H1 (cell line): ENCODE measurements at regions of chr14 and their contacts with region 1.

Region 1: GRCh38 chr14:49461529-49462401 is 124.4 kb downstream of the RPS29 start:
- DNase-seq: no peak
- H3K4me3 ChIP-seq: no peak overlapping the region
- H3K27ac ChIP-seq: no peak overlapping the region
- H3K4me1 ChIP-seq: peaks cover 0 to 7% (median 5%) of the 10 kb centered on the region in 4 experiments; a peak in 4 of 7 replicates
- H3K27me3 ChIP-seq: no peaks in the 10 kb centered on the region
- CTCF ChIP-seq: peak in 2 of 3 experiments; percentile 43 to 74; a peak in 2 of 4 replicates
- EP300 ChIP-seq: no peak
- POLR2A ChIP-seq: no peak
- RAD21 ChIP-seq: peak; percentile 77 to 78

Region 2: DNA sequence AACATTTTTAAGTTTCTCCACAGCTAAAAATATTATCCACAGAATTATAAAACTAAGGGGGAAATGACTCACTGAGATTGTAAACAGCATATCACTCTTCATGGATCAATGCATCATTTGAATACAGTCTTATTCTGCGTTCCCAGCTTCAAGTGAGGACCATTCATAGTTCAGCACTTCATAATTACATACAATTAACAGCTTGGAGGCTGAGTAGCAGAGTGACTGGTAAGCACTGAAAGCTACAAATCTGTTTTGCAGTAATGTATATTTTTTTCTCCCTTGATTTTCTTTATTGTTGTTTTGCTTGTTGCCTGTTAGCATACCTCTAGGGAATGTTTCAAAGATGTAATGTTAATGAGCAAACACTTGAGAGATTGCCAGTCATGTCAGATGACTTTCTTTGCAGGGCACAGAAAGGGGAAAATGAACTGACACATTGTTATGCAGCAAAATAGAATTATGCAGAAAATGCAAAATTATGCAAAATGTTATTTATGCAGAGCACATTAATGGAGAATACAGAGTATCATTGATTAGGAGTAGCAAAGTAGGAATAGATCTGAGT is 14.1 kb before region 1 on chr14:
- CTCF ChIA-PET with region 1: interaction called, 51 read pairs
- POLR2A ChIA-PET with region 1: no interaction called
- DNase-seq: no peak
- H3K4me3 ChIP-seq: no peak overlapping the region
- H3K27ac ChIP-seq: no peak overlapping the region
- H3K4me1 ChIP-seq: peaks cover 0 to 12% (median 0%) of the 10 kb centered on the region in 4 experiments; a peak in 1 of 7 replicates
- H3K27me3 ChIP-seq: no peaks in the 10 kb centered on the region
- CTCF ChIP-seq: no peak
- EP300 ChIP-seq: no peak
- POLR2A ChIP-seq: no peak
- RAD21 ChIP-seq: no peak

Region 3: DNA sequence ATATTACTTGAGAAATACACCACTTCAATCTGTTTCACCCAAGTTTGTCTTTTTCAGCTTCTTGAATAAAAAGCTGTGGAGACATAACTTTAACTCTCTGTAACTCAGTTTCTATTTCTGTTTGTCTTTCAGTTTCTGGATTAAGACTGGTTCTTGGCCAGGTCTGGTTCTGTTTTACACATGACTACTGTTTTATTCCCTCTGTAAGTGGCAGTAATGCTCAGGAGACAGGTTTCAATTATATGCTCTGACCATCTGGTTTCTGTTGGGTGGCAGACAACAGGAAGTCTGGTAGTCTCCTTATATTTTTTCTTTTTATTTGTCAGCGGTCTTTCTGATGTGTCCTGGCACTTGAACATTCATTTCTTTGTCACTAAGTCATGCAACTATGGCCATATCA is 21.5 kb after region 1 on chr14:
- CTCF ChIA-PET with region 1: interaction called, 37 read pairs
- POLR2A ChIA-PET with region 1: no interaction called
- DNase-seq: no peak
- H3K4me3 ChIP-seq: no peak overlapping the region
- H3K27ac ChIP-seq: no peak overlapping the region
- H3K4me1 ChIP-seq: no peaks in the 10 kb centered on the region
- H3K27me3 ChIP-seq: no peaks in the 10 kb centered on the region; a peak in 1 of 7 replicates
- CTCF ChIP-seq: no peak
- EP300 ChIP-seq: no peak
- POLR2A ChIP-seq: no peak
- RAD21 ChIP-seq: no peak

Region 4: DNA sequence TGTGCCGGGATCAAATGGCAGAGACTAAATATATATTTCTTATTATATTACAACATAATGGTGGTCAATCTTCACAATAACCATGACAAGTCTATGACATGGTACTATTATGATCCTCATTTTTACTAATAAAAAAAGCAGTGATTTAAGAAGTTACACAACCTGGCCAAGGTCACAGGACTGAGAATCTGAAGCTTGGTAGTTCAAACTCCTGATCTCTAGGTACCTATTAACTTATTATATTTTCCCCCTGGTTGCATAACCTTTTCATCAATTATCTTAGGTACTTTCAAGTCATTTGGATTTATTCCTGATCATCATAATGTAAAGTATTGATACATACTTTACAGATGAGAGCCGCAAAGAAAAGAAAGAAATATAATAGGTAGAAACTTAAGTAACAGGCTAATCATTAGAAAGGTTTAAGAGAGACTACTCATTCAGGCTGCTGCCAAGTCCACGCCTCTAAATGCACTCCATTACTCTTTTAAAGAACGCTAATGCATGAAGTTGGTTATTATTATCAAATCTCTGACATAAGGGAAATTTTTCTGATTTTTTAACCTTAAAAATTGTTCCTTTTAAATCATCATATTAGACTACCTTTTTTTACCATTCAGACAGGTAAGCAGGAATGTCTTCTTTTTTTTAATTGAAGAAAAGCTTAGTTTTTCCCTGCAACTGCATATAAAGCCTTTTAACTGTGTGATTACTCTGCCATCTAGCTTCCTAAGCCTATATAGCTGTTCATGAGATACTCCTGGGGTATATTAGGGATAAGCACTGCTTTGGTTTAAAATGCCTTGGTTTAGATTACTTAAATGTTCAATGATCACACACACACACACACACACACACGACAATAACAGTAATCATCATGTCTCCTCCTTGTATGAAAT is 88.8 kb after region 1 on chr14:
- CTCF ChIA-PET with region 1: interaction called, 21 read pairs
- POLR2A ChIA-PET with region 1: no interaction called
- DNase-seq: no peak
- H3K4me3 ChIP-seq: peak overlapping the region in 1 of 4 experiments; percentile 37; a peak in 1 of 8 replicates
- H3K27ac ChIP-seq: no peak overlapping the region
- H3K4me1 ChIP-seq: peaks cover 0 to 9% (median 6%) of the 10 kb centered on the region in 4 experiments; a peak in 3 of 7 replicates
- H3K27me3 ChIP-seq: no peaks in the 10 kb centered on the region
- CTCF ChIP-seq: peak in 2 of 3 experiments; percentile 23 to 55; a peak in 2 of 4 replicates
- EP300 ChIP-seq: no peak
- POLR2A ChIP-seq: no peak
- RAD21 ChIP-seq: peak; percentile 75